GM10248 (cell line): ENCODE measurements at regions of chr1 and their contacts with region 1.

Region 1: DNA sequence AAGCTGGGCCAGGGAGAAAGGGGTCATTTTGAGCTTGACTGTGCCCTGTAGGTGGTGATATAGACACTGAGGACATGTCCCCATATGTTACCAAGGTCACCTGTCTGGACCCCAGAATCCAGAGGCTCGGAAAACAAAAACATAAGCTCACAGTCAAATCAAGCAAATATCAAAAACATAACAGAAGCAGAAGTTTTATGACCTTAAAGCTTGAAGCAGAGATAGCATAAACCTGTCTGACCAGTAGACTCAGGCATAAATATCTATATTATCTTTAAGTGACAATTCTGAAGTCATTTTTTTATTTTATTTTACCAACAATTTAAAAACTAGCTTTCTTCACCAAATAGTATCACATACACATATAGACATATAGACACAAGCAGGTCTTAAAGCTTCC is 32.8 kb upstream of the RHOU start:
- DNase-seq: no peak
- CTCF ChIP-seq: no peak

Region 2: DNA sequence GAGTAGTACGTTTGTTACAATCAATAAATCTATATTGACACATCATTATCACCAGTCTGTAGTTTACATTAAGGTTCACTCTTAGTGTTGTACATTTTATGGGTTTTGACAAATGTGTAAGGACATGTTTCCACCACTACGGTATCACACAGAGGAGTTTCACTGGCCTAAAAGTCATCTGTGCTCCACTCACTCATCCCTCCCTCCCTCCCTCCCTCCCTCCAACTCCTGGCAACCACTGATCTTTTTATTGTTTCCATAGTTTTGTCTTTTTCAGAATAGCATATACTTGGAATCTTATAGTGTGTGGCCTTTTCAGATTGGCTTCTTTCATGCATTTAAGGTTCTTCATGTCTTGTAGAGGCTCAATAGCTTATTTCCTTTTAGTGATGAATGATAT is 11.2 kb before region 1 on chr1:
- CTCF ChIA-PET with region 1: interaction called, 10 read pairs
- POLR2A ChIA-PET with region 1: no interaction called
- DNase-seq: no peak
- CTCF ChIP-seq: no peak